ENCODE measurements at regions of chr1 and their contacts with region 1.

Region 1: DNA sequence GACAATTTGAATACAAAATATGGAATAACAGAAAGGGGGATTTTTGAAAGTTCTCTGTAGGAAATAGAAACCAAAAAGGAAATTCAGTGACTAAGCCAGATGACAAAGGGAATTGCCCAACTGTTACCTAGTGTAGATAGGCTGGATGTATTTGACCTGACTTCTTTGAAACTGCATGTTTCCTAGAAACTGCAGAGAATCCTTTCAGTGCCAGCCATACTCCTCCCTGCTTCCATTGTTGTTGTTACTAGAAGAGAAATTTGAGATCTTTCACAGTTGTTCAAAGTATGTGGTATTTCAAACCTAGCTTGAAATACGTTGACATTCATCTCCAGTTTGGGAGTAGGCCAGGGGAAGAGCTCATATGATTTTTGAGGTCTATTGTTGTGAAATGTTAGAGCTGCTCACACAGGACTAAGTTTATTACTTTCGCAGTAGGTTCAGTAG is 1.8 kb upstream of the GBP5 start:
- DNase-seq: no peak
- ATAC-seq: peak; percentile 63
- H3K4me3 Mint-ChIP-seq: peak overlapping the region; percentile 98
- H3K27ac Mint-ChIP-seq: peak overlapping the region; percentile 99
- H3K4me1 Mint-ChIP-seq: peaks cover 75% of the 10 kb centered on the region
- H3K27me3 Mint-ChIP-seq: no peaks in the 10 kb centered on the region

Region 2: DNA sequence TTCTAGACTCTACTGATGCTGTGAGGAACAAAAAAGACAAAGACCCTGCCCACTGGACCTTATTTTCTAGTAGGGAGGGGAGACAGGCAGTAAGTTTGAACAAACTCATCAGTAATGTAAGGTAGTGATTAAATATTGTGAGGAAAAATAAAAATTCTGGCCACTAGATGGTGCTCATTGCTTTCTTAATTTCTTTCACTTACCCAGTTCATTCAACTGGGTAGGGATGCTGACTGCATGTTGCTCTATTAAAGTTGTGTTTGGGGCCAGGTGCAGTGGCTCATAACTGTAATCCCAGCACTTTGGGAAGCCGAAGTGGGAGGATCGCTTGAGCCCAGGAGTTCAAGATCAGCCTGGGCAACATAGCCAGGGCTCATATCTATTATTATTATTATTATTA is 275.7 kb before region 1 on chr1:
- CTCF ChIA-PET with region 1: interaction called, 3 read pairs
- POLR2A ChIA-PET with region 1: no interaction called
- intact Hi-C with region 1: loop called in 1 of 2 experiments (anchors 2 kb)
- DNase-seq: peak; percentile 22
- ATAC-seq: peak; percentile 88
- H3K4me3 Mint-ChIP-seq: no peak overlapping the region
- H3K27ac Mint-ChIP-seq: no peak overlapping the region
- H3K4me1 Mint-ChIP-seq: peaks cover 31% of the 10 kb centered on the region
- H3K27me3 Mint-ChIP-seq: peaks cover 5% of the 10 kb centered on the region

Region 3: DNA sequence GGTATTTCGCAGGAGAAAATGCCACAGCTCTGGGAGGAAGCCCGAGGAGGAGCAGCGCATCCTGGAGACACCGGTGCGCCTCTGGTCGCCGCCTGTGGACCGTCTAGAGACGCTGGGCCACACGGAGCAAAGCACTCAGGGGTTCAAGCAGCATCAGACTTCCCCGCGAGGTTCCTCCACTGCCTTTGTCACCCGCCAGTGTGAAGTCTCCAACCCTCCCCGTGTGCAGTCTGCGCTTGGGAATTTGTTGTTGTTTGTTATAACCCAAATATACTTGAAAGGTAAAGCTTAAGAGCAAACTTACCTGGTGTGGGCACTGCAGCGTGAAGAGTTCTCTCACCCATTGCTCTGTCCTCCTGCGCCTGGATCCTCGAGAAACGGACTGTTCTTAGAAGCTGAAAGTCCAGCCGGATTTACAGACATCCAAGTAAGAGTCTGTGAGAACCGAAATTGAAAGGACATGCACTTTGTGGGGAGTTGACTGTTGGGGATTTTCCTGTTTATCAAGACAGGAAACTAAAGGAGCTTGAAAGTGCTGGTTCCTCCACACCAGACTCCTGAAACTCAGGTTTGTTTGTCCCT is 75.9 kb before region 1 on chr1 and contains the start of gene GBP4:
- CTCF ChIA-PET with region 1: interaction called, 3 read pairs
- POLR2A ChIA-PET with region 1: interaction called, 8 read pairs
- intact Hi-C with region 1: loop called (anchors 1 to 2 kb)
- DNase-seq: peak; percentile 63
- ATAC-seq: peak; percentile 67
- H3K4me3 Mint-ChIP-seq: peak within 1 kb of the TSS; percentile 83
- H3K27ac Mint-ChIP-seq: peak within 1 kb of the TSS; percentile 98
- H3K4me1 Mint-ChIP-seq: peaks cover 73% of the 10 kb centered on the region
- H3K27me3 Mint-ChIP-seq: no peaks in the 10 kb centered on the region
- total RNA-seq, gene GBP4: 30.8 to 34.4 TPM

Region 4: GRCh38 chr1:89286549-89287180 is 12.2 kb after region 1 on chr1:
- CTCF ChIA-PET with region 1: interaction called, 5 read pairs
- POLR2A ChIA-PET with region 1: no interaction called
- intact Hi-C with region 1: loop called (anchors 1 kb)
- DNase-seq: no peak
- ATAC-seq: peak; percentile 77
- H3K4me3 Mint-ChIP-seq: peak overlapping the region; percentile 44
- H3K27ac Mint-ChIP-seq: peak overlapping the region; percentile 93
- H3K4me1 Mint-ChIP-seq: peaks cover 74% of the 10 kb centered on the region
- H3K27me3 Mint-ChIP-seq: no peaks in the 10 kb centered on the region

Region 5: DNA sequence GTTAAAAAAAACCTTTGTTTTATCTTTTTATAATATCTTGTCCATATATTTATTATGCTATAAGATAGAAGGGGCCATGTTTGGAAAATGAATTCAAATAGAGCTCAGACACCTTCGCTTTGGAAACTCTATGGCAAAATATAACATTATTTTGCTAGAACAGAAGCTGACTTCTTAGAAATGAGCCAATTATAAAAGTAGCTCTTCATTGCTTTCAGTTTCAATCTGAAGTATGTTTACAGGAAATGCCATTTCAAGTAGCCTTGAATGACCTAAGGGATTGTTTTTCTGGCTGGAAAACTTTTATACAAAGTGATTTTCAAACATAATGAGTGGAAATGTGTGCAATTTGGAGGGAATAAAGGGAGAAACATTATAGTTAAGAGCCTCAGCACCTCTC is 36.1 kb after region 1 on chr1:
- CTCF ChIA-PET with region 1: interaction called, 3 read pairs
- POLR2A ChIA-PET with region 1: interaction called, 14 read pairs
- intact Hi-C with region 1: loop called (anchors 1 kb)
- DNase-seq: no peak
- ATAC-seq: peak; percentile 78
- H3K4me3 Mint-ChIP-seq: no peak overlapping the region
- H3K27ac Mint-ChIP-seq: peak overlapping the region; percentile 86
- H3K4me1 Mint-ChIP-seq: peaks cover 34% of the 10 kb centered on the region
- H3K27me3 Mint-ChIP-seq: no peaks in the 10 kb centered on the region

Region 6: GRCh38 chr1:89524369-89525168 is 250.1 kb after region 1 on chr1 and contains the start of gene LRRC8B:
- CTCF ChIA-PET with region 1: no interaction called
- POLR2A ChIA-PET with region 1: no interaction called
- intact Hi-C with region 1: loop called in 1 of 2 experiments (anchors 5 kb)
- DNase-seq: peak; percentile 94
- ATAC-seq: peak; percentile 71
- H3K4me3 Mint-ChIP-seq: no peak within 1 kb of the TSS
- H3K27ac Mint-ChIP-seq: no peak within 1 kb of the TSS
- H3K4me1 Mint-ChIP-seq: peaks cover 24% of the 10 kb centered on the region
- H3K27me3 Mint-ChIP-seq: no peaks in the 10 kb centered on the region
- total RNA-seq, gene LRRC8B: 38.9 to 41.5 TPM

Measured in activated CD4-positive, alpha-beta T cell treated with anti-CD3 and anti-CD28 coated beads for 36 hours (primary cell).